HepG2 (cell line): ENCODE measurements at regions of chr1 and their contacts with region 1.

Region 1: GRCh38 chr1:92080128-92080985 is at the start of gene BTBD8:
- DNase-seq: peak; percentile 68
- ATAC-seq: peak; percentile 98
- H3K4me3 ChIP-seq: peak within 1 kb of the TSS; percentile 71 to 88 (median 77)
- H3K27ac ChIP-seq: peak within 1 kb of the TSS; percentile 43
- H3K4me1 ChIP-seq: peaks cover 12% of the 10 kb centered on the region; the same call in 1 of the 2 replicates
- H3K27me3 ChIP-seq: no peaks in the 10 kb centered on the region; a peak in 1 of 5 replicates
- CTCF ChIP-seq: peak; percentile 39
- EP300 ChIP-seq: no peak
- POLR2A ChIP-seq: peak; percentile 39 to 59; a peak in 2 of 4 replicates
- RAD21 ChIP-seq: no peak; the same call in 1 of the 2 replicates
- total RNA-seq, gene BTBD8: 1.8 TPM in 2 replicates

Region 2: GRCh38 chr1:92029241-92029922 is 51.0 kb before region 1 on chr1:
- CTCF ChIA-PET with region 1: no interaction called
- POLR2A ChIA-PET with region 1: no interaction called
- in situ Hi-C with region 1: no loop called
- intact Hi-C with region 1: loop called (anchors 5 kb)
- DNase-seq: no peak
- ATAC-seq: no peak; the same call in 2 of the 3 replicates
- H3K4me3 ChIP-seq: peak overlapping the region; percentile 20 to 70 (median 26); a peak in 2 of 6 replicates
- H3K27ac ChIP-seq: no peak overlapping the region
- H3K4me1 ChIP-seq: peaks cover 16% of the 10 kb centered on the region
- H3K27me3 ChIP-seq: peaks cover 3 to 31% of the 10 kb centered on the region in 2 experiments; a peak in 3 of 5 replicates
- CTCF ChIP-seq: no peak
- EP300 ChIP-seq: no peak
- POLR2A ChIP-seq: no peak
- RAD21 ChIP-seq: no peak

Region 3: DNA sequence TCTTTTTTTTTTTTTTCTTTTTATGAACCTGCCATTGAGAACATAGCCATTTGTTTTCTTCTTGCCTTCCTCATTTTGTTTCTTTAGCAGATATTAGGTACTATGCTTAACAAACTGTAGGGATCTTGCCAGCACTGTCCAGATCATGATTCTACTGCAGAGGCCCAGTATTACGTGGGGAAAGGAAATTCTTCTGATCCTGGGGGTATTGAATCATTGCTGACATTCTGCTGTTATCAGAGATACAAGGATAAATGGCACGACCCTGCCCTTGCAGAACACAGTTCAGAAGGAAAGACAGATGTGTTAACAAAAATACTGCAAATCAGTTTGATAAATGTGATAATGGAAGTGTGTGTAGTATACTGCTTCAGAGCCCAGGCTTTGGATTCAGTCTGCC is 56.0 kb after region 1 on chr1:
- CTCF ChIA-PET with region 1: no interaction called
- POLR2A ChIA-PET with region 1: no interaction called
- in situ Hi-C with region 1: loop called (anchors 10 kb)
- intact Hi-C with region 1: no loop called
- DNase-seq: no peak
- ATAC-seq: no peak
- H3K4me3 ChIP-seq: no peak overlapping the region
- H3K27ac ChIP-seq: no peak overlapping the region
- H3K4me1 ChIP-seq: no peaks in the 10 kb centered on the region
- H3K27me3 ChIP-seq: no peaks in the 10 kb centered on the region
- CTCF ChIP-seq: no peak
- EP300 ChIP-seq: no peak
- POLR2A ChIP-seq: no peak
- RAD21 ChIP-seq: no peak